Activated naive CD4-positive, alpha-beta T cell treated with anti-CD3 and anti-CD28 coated beads, Interleukin-2, amount 10 ng/mL, durations not matched to agents 7 days and 5 days (primary cell): ENCODE measurements at regions of chr1 and their contacts with region 1.

Region 1: DNA sequence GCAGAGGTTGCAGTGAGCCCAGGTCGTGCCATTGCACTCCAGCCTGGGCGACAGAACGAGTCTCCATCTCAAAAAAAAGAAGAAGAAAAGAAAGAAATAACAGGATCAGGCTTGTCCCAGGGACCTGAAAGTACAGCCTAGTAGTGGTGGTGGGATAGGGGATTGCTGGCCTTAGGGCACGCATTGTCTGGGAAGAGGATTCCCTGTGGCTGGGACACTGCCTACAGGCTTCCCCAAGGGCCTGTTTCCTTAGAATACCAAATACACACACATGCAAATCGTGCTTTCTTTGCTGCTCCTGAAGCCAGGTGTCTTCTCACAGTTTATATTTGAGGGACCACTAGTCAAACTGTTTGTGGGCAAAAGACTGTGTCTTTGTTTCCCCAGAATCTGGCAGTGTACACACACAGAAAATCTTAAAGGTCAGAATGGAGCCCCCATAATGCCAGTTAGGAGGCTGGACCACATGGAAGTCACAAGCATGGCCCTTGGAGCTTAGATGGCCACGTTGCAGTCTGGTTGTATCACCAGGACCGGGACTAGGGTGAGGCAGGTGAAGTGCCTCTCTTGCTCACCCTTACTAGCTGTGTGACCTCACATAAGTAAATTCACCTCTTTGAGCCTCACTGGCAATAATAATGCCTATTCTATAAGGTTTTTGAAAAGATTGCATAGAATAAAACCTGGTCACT is 12.7 kb upstream of the ASAP3 start:
- DNase-seq: no peak
- H3K4me3 Mint-ChIP-seq: no peak overlapping the region
- H3K27ac Mint-ChIP-seq: no peak overlapping the region
- H3K4me1 Mint-ChIP-seq: peaks cover 5% of the 10 kb centered on the region
- H3K27me3 Mint-ChIP-seq: peaks cover 46% of the 10 kb centered on the region

Region 2: DNA sequence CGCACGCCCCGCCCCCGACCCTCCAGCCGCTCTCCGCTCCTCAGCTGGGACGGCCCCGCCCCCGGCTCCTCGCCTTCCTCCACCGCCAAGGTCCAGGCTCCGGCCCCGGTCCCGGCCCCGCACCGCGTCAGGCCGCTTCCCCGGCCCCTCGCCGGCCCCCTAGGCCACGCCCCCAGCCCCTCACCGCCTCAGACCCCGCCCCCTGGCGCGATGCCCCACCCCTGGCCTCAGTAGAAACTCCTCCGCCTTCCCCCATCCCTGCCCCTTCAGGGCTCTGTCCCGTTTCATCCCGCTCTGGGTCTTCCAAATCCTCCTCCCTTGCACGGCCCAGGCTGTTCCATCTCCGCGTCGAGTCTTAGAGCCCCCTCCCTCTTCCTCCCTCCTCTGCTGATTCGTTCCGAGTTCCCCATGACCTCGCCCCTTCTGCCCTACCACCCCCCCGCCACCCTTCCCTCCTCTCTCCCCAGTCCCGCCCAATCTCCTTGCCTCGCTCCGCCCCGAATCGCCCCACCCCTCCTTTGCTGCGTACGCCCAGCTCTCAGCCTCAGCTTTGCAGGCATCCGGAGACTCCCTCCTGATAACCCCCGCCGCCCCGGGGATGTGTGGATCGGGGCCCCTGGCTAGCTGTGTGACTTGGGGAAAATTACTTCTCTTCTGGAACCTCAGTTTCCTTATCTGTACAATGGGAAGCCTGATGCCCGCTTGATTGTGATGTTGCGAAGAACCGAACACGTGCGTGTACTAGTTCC is 12.2 kb before region 1 on chr1:
- CTCF ChIA-PET with region 1: interaction called, 34 read pairs
- DNase-seq: peak; percentile 97
- H3K4me3 Mint-ChIP-seq: peak overlapping the region; percentile 87
- H3K27ac Mint-ChIP-seq: peak overlapping the region; percentile 81
- H3K4me1 Mint-ChIP-seq: peaks cover 18% of the 10 kb centered on the region
- H3K27me3 Mint-ChIP-seq: peaks cover 86% of the 10 kb centered on the region

Region 3: GRCh38 chr1:23524716-23525401 is 28.2 kb after region 1 on chr1:
- CTCF ChIA-PET with region 1: interaction called, 137 read pairs
- DNase-seq: peak; percentile 73
- H3K4me3 Mint-ChIP-seq: peak overlapping the region; percentile 66
- H3K27ac Mint-ChIP-seq: peak overlapping the region; percentile 96
- H3K4me1 Mint-ChIP-seq: peaks cover 78% of the 10 kb centered on the region
- H3K27me3 Mint-ChIP-seq: no peaks in the 10 kb centered on the region

Region 4: GRCh38 chr1:23539698-23540266 is 43.1 kb after region 1 on chr1:
- CTCF ChIA-PET with region 1: interaction called, 220 read pairs
- DNase-seq: peak; percentile 96
- H3K4me3 Mint-ChIP-seq: no peak overlapping the region
- H3K27ac Mint-ChIP-seq: peak overlapping the region; percentile 63
- H3K4me1 Mint-ChIP-seq: peaks cover 28% of the 10 kb centered on the region
- H3K27me3 Mint-ChIP-seq: peaks cover 4% of the 10 kb centered on the region

Region 5: DNA sequence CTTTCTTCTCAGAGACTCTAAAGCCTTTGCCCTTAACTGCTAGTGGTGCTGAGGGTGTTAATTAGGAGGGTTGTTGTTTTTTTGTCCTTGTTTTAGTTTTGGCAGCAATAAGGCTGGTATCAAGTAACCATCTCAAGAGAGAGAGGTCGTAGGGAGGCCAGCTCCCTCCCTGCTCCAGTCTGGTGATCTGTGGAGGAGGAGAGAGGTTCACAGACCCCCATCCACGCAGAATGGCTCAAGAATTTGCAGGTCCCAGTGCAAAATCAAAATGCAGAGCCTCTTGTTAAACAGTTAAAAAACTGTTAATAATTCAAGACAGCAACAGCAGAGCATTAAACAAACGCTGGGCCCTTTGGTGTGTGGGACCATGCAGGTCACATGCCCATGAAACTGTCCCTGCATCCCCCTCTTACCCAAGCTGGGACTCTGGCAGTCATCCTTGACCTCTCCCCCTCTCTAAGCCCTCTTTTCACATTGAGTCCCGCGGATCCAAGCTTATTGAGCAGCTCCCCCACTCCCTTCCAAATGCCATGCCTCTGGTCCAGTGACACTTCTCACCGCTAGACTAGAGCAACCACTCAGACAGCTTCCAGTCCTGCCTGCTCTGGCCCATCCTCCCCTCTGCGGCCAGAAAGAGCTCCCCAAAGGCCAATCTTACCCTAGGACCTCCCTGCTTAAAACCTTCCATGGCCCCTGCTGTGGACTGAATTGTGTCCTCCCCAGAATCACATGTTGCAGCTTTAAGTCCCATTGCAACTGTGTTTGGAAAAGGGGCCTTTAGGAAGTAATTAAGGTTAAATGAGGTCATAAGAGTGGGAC is 147.3 kb after region 1 on chr1:
- CTCF ChIA-PET with region 1: interaction called, 50 read pairs
- DNase-seq: no peak
- H3K4me3 Mint-ChIP-seq: no peak overlapping the region
- H3K27ac Mint-ChIP-seq: no peak overlapping the region
- H3K4me1 Mint-ChIP-seq: no peaks in the 10 kb centered on the region
- H3K27me3 Mint-ChIP-seq: peaks cover 25% of the 10 kb centered on the region